Mammary epithelial cell (primary cell): ENCODE measurements at regions of chr11 and their contacts with region 1.

Region 1: DNA sequence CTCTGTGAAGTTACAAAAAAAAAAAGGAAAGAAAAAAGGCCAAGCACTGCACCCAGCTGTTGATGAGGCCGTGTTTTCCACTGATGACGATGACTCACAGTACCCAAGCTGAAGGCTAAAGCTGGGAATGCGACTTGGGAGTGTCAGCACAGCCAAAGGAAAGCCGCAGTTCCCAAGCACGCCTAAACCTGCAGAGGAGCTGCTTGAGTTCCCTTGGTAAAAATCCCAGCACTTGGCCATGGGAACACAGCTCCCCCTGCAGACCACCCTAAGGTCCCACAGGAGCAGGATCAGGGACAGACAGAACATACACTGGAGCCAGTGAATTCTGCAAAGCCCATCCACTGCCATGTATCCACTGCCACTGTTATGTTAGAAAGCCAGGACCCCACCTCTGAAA is 39.9 kb downstream of the SERGEF start:
- DNase-seq: peak; percentile 94
- H3K4me3 ChIP-seq: no peak overlapping the region
- H3K27ac ChIP-seq: no peak overlapping the region
- H3K4me1 ChIP-seq: peaks cover 10% of the 10 kb centered on the region
- H3K27me3 ChIP-seq: no peaks in the 10 kb centered on the region
- CTCF ChIP-seq: peak; percentile 91 to 93

Region 2: DNA sequence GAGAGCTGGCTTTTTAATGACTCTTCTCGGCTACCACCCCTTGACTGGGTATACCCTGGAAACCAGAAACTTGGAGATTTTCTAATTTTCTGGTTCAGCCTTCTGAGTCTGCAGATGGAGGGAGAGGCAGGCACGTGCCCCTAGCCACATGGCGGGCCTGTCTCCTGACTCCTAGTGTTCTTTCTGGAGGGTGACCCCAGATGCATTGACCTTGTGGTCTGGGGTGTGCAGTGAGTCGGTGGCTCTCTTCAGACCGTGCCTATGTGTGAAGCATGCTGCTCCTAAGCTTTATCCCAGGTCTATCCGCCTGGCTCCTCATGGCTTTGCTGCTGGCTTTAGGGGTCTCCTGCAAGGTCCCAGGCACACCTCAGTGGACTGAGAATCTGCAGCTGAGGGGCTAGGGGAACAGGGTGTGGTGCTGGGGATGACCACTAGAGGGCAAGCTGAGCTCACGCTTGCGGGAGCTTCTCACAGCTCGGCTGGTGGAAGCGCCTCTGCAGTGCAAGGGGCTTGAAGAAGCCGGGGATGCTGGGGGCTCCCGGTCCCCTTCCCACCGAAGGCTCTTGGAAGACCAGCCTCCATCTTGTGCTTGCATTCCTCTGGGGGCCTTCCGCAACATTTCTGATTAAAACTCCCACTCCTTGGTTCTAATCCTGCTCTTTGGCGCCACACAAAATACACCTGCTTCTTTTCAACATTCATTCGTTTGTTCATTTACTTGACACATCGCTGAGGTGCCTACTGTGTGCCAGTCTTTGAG is 374.1 kb before region 1 on chr11:
- CTCF ChIA-PET with region 1: no interaction called
- dilution Hi-C with region 1: no loop called
- in situ Hi-C with region 1: loop called (anchors 10 kb)
- intact Hi-C with region 1: loop called (anchors 1 kb)
- DNase-seq: peak; percentile 20
- H3K4me3 ChIP-seq: no peak overlapping the region
- H3K27ac ChIP-seq: no peak overlapping the region
- H3K4me1 ChIP-seq: no peaks in the 10 kb centered on the region
- H3K27me3 ChIP-seq: no peaks in the 10 kb centered on the region
- CTCF ChIP-seq: peak; percentile 96 to 97

Region 3: GRCh38 chr11:17730608-17731462 is 242.2 kb before region 1 on chr11:
- CTCF ChIA-PET with region 1: interaction called, 20 read pairs
- dilution Hi-C with region 1: loop called (anchors 5 kb)
- in situ Hi-C with region 1: loop called (anchors 5 to 10 kb)
- intact Hi-C with region 1: loop called (anchors 1 kb)
- DNase-seq: peak; percentile 68
- H3K4me3 ChIP-seq: no peak overlapping the region
- H3K27ac ChIP-seq: no peak overlapping the region
- H3K4me1 ChIP-seq: peaks cover 9% of the 10 kb centered on the region
- H3K27me3 ChIP-seq: peaks cover 12% of the 10 kb centered on the region
- CTCF ChIP-seq: peak; percentile 82 to 96

Region 4: GRCh38 chr11:17760102-17761029 is 212.6 kb before region 1 on chr11:
- CTCF ChIA-PET with region 1: interaction called, 5 read pairs
- dilution Hi-C with region 1: no loop called
- in situ Hi-C with region 1: loop called (anchors 10 kb)
- intact Hi-C with region 1: loop called (anchors 1 kb)
- DNase-seq: peak; percentile 26
- H3K4me3 ChIP-seq: no peak overlapping the region
- H3K27ac ChIP-seq: no peak overlapping the region
- H3K4me1 ChIP-seq: no peaks in the 10 kb centered on the region
- H3K27me3 ChIP-seq: no peaks in the 10 kb centered on the region
- CTCF ChIP-seq: peak; percentile 53 to 64

Region 5: GRCh38 chr11:17770048-17770652 is 202.8 kb before region 1 on chr11:
- CTCF ChIA-PET with region 1: interaction called, 6 read pairs
- dilution Hi-C with region 1: no loop called
- in situ Hi-C with region 1: loop called in 1 of 2 experiments (anchors 10 kb)
- intact Hi-C with region 1: loop called (anchors 1 kb)
- DNase-seq: no peak
- H3K4me3 ChIP-seq: no peak overlapping the region
- H3K27ac ChIP-seq: no peak overlapping the region
- H3K4me1 ChIP-seq: peaks cover 4% of the 10 kb centered on the region
- H3K27me3 ChIP-seq: no peaks in the 10 kb centered on the region
- CTCF ChIP-seq: peak; percentile 3 to 18

Region 6: GRCh38 chr11:17846852-17847453 is 126.0 kb before region 1 on chr11:
- CTCF ChIA-PET with region 1: no interaction called
- dilution Hi-C with region 1: no loop called
- in situ Hi-C with region 1: no loop called
- intact Hi-C with region 1: loop called (anchors 1 kb)
- DNase-seq: peak; percentile 31
- H3K4me3 ChIP-seq: no peak overlapping the region
- H3K27ac ChIP-seq: no peak overlapping the region
- H3K4me1 ChIP-seq: peaks cover 18% of the 10 kb centered on the region
- H3K27me3 ChIP-seq: no peaks in the 10 kb centered on the region
- CTCF ChIP-seq: peak; percentile 28 to 51

Region 7: GRCh38 chr11:17921659-17922415 is 51.1 kb before region 1 on chr11:
- CTCF ChIA-PET with region 1: no interaction called
- dilution Hi-C with region 1: no loop called
- in situ Hi-C with region 1: no loop called
- intact Hi-C with region 1: no loop called
- DNase-seq: no peak
- H3K4me3 ChIP-seq: no peak overlapping the region
- H3K27ac ChIP-seq: no peak overlapping the region
- H3K4me1 ChIP-seq: no peaks in the 10 kb centered on the region
- H3K27me3 ChIP-seq: no peaks in the 10 kb centered on the region
- CTCF ChIP-seq: no peak